Activated B cell treated with CpG ODN at 0.5 μM for 24 hours (primary cell): ENCODE measurements at regions of chrX and their contacts with region 1.

Region 1: DNA sequence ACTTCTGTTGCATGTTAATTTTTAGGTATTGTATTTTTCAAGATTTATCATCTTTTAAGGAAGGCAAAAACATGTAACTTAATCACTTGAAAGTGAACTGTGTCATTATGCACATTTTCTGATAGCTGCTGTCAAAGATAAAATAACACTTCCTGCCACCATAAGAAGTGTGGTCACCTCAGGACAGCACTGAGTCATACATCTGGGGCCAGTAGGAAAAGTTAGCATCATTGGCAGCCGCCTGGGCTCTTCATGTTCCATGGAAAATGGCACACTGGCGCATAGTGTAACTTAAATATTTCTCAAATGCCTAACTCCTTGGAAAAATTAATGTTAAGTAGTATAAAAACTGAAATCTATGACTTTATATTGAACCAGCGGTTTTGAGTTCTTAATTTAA is 24.2 kb downstream of the CNKSR2 start:
- DNase-seq: no peak
- ATAC-seq: no peak
- H3K4me3 Mint-ChIP-seq: no peak overlapping the region
- H3K27ac Mint-ChIP-seq: no peak overlapping the region
- H3K4me1 Mint-ChIP-seq: peaks cover 22% of the 10 kb centered on the region
- H3K27me3 Mint-ChIP-seq: no peaks in the 10 kb centered on the region
- CTCF ChIP-seq: no peak

Region 2: DNA sequence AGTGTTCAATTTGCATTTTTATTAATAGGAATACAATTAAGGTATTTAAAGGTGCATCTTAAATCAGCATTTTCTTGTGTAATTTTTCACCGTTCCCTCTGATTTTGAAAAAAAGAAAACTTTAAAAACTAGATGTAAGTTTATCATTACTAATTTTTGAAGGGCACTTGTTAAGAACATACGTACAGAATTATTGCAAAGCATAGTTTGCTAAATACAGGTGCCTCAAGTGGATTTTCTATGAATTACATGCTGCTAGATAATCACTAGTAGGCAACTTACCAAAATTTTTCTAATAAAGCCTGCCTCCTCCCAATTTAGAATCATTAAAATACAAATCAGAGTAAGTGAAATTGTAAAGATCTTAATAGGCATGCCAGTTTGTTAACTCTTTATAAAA is 15.7 kb before region 1 on chrX:
- CTCF ChIA-PET with region 1: no interaction called
- POLR2A ChIA-PET with region 1: no interaction called
- intact Hi-C with region 1: loop called (anchors 2 kb)
- DNase-seq: no peak
- ATAC-seq: peak; percentile 34
- H3K4me3 Mint-ChIP-seq: no peak overlapping the region
- H3K27ac Mint-ChIP-seq: no peak overlapping the region
- H3K4me1 Mint-ChIP-seq: peaks cover 20% of the 10 kb centered on the region
- H3K27me3 Mint-ChIP-seq: no peaks in the 10 kb centered on the region
- CTCF ChIP-seq: no peak

Region 3: DNA sequence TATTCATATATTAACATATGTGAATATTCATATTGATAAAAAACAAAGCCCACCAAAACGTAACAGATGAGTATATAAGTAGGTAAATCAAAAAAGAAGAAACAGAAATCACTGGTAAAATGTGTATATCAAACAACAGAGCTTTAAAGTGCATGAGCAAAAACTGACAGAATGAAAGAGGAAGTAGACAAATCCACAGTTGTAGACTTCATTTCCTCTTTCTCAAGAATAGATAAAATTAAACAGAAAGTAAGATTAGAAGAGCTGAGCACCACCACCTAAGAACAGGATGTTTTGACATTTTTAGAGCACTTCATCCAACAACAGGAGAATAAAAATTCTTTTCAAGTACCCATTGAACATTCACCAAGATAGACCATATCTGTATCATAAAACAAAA is 40.4 kb after region 1 on chrX:
- CTCF ChIA-PET with region 1: no interaction called
- POLR2A ChIA-PET with region 1: no interaction called
- intact Hi-C with region 1: loop called (anchors 5 kb)
- DNase-seq: no peak
- ATAC-seq: peak; percentile 88
- H3K4me3 Mint-ChIP-seq: peak overlapping the region; percentile 76
- H3K27ac Mint-ChIP-seq: peak overlapping the region; percentile 91
- H3K4me1 Mint-ChIP-seq: peaks cover 37% of the 10 kb centered on the region
- H3K27me3 Mint-ChIP-seq: no peaks in the 10 kb centered on the region
- CTCF ChIP-seq: no peak

Region 4: GRCh38 chrX:22730542-22730941 is 1332.1 kb after region 1 on chrX:
- CTCF ChIA-PET with region 1: no interaction called
- POLR2A ChIA-PET with region 1: no interaction called
- intact Hi-C with region 1: no loop called
- DNase-seq: no peak
- ATAC-seq: no peak
- H3K4me3 Mint-ChIP-seq: no peak overlapping the region
- H3K27ac Mint-ChIP-seq: no peak overlapping the region
- H3K4me1 Mint-ChIP-seq: no peaks in the 10 kb centered on the region
- H3K27me3 Mint-ChIP-seq: peaks cover 2% of the 10 kb centered on the region
- CTCF ChIP-seq: no peak